B cell (primary cell): ENCODE measurements at regions of chr5 and their contacts with region 1.

Region 1: GRCh38 chr5:157130925-157131324 is 11.7 kb downstream of the MED7 start:
- DNase-seq: no peak
- ATAC-seq: no peak
- H3K4me3 ChIP-seq: no peak overlapping the region
- H3K4me3 Mint-ChIP-seq: no peak overlapping the region
- H3K27ac ChIP-seq: no peak overlapping the region
- H3K27ac Mint-ChIP-seq: no peak overlapping the region
- H3K4me1 ChIP-seq: peaks cover 0 to 5% of the 10 kb centered on the region in 2 donors
- H3K4me1 Mint-ChIP-seq: peaks cover 11% of the 10 kb centered on the region
- H3K27me3 ChIP-seq: no peaks in the 10 kb centered on the region
- H3K27me3 Mint-ChIP-seq: no peaks in the 10 kb centered on the region
- CTCF ChIP-seq: no peak

Region 2: GRCh38 chr5:155943516-155944407 is 1187.2 kb before region 1 on chr5:
- CTCF ChIA-PET with region 1: interaction called, 6 read pairs
- POLR2A ChIA-PET with region 1: no interaction called
- intact Hi-C with region 1: loop called (anchors 10 kb)
- DNase-seq: peak; percentile 16
- ATAC-seq: no peak
- H3K4me3 ChIP-seq: no peak overlapping the region
- H3K4me3 Mint-ChIP-seq: no peak overlapping the region
- H3K27ac ChIP-seq: no peak overlapping the region
- H3K27ac Mint-ChIP-seq: no peak overlapping the region
- H3K4me1 ChIP-seq: no peaks in the 10 kb centered on the region
- H3K4me1 Mint-ChIP-seq: peaks cover 5% of the 10 kb centered on the region
- H3K27me3 ChIP-seq: no peaks in the 10 kb centered on the region
- H3K27me3 Mint-ChIP-seq: peaks cover 9% of the 10 kb centered on the region
- CTCF ChIP-seq: peak; percentile 16

Region 3: GRCh38 chr5:156850206-156850751 is 280.6 kb before region 1 on chr5 and contains the start of gene PPP1R2B:
- CTCF ChIA-PET with region 1: no interaction called
- POLR2A ChIA-PET with region 1: no interaction called
- intact Hi-C with region 1: no loop called
- DNase-seq: no peak
- ATAC-seq: no peak
- H3K4me3 ChIP-seq: no peak within 1 kb of the TSS
- H3K4me3 Mint-ChIP-seq: no peak within 1 kb of the TSS
- H3K27ac ChIP-seq: no peak within 1 kb of the TSS
- H3K27ac Mint-ChIP-seq: no peak within 1 kb of the TSS
- H3K4me1 ChIP-seq: no peaks in the 10 kb centered on the region
- H3K4me1 Mint-ChIP-seq: no peaks in the 10 kb centered on the region
- H3K27me3 ChIP-seq: peaks cover 0 to 6% (median 4%) of the 10 kb centered on the region in 4 experiments
- H3K27me3 Mint-ChIP-seq: peaks cover 49% of the 10 kb centered on the region
- CTCF ChIP-seq: no peak
- total RNA-seq, gene PPP1R2B: 0.15 and 0.36 TPM in 2 replicates

Region 4: DNA sequence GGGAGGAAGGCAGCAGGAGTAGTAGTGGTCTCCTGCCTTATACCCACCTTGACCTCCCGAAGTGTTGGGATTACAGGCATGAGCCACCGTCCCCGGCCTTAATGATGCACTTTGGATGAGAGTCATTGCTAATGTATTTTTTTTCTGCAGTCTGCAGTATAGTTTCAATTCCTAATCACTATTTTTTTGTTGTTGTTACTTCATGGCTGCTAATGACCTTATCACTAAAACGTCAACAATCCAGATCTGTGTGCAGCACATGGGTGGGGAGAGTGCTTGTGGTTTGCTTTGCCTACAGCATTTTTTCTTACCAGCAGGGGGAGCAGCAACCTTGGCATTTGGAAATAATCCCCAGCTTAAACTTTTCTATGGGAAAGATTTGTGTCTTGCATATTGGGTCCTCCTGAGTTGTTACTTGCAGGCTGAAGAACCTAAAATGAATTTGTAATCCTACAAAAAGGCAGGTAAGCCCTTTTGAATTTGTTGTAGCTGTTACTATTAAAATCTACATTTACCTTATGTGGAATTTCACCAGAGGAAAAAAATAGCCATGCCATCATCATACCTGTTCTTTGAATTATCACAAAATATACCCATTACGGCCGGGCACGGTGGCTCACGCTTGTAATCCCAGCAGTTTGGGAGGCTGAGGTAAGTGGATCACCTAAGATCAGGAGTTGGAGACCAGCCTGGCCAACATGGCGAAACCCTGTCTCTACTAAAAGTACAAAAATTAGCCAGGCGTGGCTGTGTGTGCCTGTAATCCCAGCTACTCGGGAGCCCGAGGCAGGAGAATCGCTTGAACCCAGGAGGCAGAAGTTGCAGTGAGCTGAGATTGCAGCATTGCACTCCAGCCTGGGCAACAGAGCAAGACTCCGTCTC is 18.1 kb after region 1 on chr5:
- CTCF ChIA-PET with region 1: no interaction called
- POLR2A ChIA-PET with region 1: no interaction called
- intact Hi-C with region 1: no loop called
- DNase-seq: peak; percentile 80
- ATAC-seq: peak; percentile 81
- H3K4me3 ChIP-seq: no peak overlapping the region
- H3K4me3 Mint-ChIP-seq: no peak overlapping the region
- H3K27ac ChIP-seq: no peak overlapping the region
- H3K27ac Mint-ChIP-seq: no peak overlapping the region
- H3K4me1 ChIP-seq: peaks cover 2 to 5% of the 10 kb centered on the region in 2 donors
- H3K4me1 Mint-ChIP-seq: peaks cover 5% of the 10 kb centered on the region
- H3K27me3 ChIP-seq: no peaks in the 10 kb centered on the region
- H3K27me3 Mint-ChIP-seq: no peaks in the 10 kb centered on the region
- CTCF ChIP-seq: peak; percentile 97

Region 5: DNA sequence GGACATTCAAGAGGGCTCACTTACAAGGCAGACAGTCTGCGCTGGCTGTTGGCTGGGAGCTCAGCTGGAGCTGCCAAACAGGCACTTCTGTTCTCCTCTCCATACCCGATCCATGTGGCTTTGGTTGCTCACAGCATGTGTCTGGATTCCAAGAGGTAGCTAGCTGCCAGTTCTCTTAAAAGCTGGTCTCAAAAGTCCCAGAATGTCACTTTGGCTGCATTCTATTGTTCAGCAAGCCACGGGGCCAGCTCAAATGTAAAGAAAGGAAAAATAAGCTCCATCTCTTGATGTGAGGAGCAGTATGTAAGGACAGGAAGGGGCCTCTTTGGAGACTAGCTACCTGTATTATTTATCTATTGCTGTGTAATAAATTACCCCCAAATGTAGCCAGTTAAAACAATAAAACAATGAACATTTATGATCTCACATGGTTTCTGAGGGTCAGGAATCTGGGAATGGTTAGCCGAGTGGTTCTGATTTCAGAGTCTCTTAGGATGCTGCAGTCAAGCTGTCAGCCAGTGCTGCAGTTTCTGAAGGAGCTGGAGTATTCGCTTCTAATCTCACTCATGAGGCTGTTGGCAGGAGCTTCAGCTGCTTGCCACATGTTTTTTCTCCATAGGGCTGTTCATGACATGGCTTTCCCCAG is 840.8 kb after region 1 on chr5:
- CTCF ChIA-PET with region 1: no interaction called
- POLR2A ChIA-PET with region 1: no interaction called
- intact Hi-C with region 1: no loop called
- DNase-seq: no peak
- ATAC-seq: no peak
- H3K4me3 ChIP-seq: no peak overlapping the region
- H3K4me3 Mint-ChIP-seq: no peak overlapping the region
- H3K27ac ChIP-seq: no peak overlapping the region
- H3K27ac Mint-ChIP-seq: no peak overlapping the region
- H3K4me1 ChIP-seq: no peaks in the 10 kb centered on the region
- H3K4me1 Mint-ChIP-seq: no peaks in the 10 kb centered on the region
- H3K27me3 ChIP-seq: peaks cover 0 to 5% (median 2%) of the 10 kb centered on the region in 4 experiments
- H3K27me3 Mint-ChIP-seq: peaks cover 18% of the 10 kb centered on the region
- CTCF ChIP-seq: no peak